ENCODE measurements at regions of chr14 and their contacts with region 1.

Region 1: DNA sequence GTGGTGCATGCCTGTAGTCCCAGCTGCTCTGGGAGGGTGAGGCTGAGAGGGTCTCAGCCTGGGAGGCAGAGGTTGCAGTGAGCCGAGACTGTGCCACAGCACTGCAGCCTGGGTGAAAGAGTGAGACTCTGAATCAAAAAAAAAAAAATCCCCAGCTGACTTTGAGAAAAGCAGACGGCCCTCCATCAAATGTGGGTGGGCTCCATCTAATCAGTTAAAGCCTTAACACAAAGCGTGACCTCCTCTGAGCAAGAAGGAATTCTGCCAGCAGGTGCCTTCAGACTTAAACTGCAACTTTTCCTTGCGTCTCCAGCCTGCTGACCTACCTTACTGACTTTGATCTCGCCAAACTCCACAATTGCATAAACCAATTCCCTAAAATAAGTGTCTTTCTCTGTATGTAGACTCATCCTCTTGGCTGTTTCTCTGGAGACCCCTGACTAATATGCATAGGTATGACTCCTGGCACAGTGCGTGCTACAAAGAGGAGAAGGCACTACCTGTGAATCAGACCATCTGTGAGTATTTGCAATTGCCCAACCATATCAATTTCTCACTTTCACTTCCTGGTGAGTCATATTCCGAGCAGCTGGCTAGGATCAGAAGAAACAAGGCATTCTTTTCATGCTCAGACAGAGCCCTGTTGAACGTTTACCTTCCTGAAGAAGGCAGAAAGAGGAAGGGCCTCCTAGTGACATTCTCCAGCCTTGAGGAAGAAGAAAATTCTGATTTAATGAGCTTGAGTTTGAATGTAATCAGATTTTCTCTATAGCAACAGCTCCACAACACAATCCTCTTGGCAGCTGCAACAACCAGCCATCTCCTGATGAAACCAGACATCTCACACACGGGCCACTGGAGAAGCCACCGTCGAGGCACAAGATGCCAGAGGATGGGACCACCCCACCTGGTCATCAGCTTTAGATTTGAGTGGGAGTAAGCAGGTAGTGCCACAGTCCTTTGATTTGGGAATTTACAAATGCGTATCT is 54.3 kb downstream of the CLMN start:
- DNase-seq: peak; percentile 88 to 97
- ATAC-seq: peak; percentile 98 to 99
- H3K4me3 ChIP-seq: no peak overlapping the region; the same call in 2 of the 3 replicates
- H3K27ac ChIP-seq: peak overlapping the region; percentile 86 to 88
- H3K4me1 ChIP-seq: peaks cover 36% of the 10 kb centered on the region
- CTCF ChIP-seq: no peak
- EP300 ChIP-seq: peak; percentile 94 to 96
- POLR2A ChIP-seq: no peak
- RAD21 ChIP-seq: peak; percentile 31 to 54; a peak in 4 of 5 replicates

Region 2: GRCh38 chr14:95250140-95250769 is 15.1 kb before region 1 on chr14:
- CTCF ChIA-PET with region 1: interaction called, 4 read pairs
- POLR2A ChIA-PET with region 1: interaction called, 11 read pairs
- DNase-seq: no peak
- ATAC-seq: no peak
- H3K4me3 ChIP-seq: no peak overlapping the region
- H3K27ac ChIP-seq: peak overlapping the region; percentile 83 to 88
- H3K4me1 ChIP-seq: peaks cover 40% of the 10 kb centered on the region
- CTCF ChIP-seq: no peak
- EP300 ChIP-seq: no peak
- POLR2A ChIP-seq: no peak
- RAD21 ChIP-seq: no peak

Region 3: DNA sequence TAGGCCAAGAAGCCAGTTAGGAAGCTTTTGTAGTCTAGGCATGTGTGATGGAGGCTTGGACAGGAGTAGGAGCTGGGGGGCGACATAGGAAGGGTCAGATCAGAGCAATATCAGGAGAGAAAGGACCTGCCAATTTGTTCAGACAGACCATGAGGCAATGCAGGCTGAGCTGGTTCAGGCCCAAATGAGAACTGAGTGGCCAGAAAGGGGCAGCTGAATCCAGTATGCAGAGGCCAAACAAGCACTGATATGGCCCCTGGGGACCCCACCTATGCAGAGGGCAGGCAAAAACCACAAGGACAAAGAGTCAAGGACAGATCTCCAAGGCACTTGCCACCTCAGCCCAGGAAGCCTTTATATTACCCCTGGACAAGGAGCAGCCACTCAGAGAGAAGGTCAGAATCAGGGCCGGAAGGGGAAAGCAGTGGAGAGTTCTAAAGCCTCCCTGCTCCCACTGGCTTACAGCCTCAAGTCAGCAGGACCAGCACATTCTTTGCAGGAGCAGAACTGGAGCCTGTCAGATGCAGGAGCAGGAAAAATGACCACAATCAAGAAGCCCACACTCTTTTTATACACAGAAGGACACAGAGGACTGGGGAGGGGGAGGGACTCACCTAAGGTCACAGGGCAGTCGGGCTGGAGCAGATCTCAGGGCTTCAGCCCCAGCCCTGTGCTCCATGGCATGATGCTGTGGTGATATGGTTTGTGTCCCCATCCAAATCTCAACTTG is 17.1 kb after region 1 on chr14:
- CTCF ChIA-PET with region 1: no interaction called
- POLR2A ChIA-PET with region 1: no interaction called
- DNase-seq: no peak
- ATAC-seq: no peak
- H3K4me3 ChIP-seq: no peak overlapping the region
- H3K27ac ChIP-seq: no peak overlapping the region
- H3K4me1 ChIP-seq: no peaks in the 10 kb centered on the region
- CTCF ChIP-seq: no peak
- EP300 ChIP-seq: no peak
- POLR2A ChIP-seq: no peak
- RAD21 ChIP-seq: no peak

Region 4: DNA sequence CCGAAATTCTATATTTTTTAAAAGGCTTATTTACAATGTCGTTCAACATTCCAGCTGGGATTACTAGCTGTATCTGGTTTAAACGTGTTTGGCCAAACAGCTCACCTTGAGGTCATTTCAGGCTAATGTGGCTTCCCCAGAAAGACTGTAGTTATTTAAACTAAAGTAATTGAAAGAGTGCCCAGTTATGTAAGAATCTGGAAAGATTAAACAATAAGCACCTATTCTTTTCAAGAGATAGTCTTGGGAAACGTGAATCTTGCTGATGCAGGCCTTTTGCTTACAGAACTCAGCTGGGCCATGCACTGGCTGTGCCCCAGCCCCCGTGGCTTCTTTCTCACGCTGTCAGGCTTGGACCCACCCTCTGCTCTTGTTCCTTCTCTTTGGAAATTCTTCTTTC is 293.8 kb after region 1 on chr14:
- CTCF ChIA-PET with region 1: no interaction called
- POLR2A ChIA-PET with region 1: no interaction called
- DNase-seq: no peak
- ATAC-seq: no peak
- H3K4me3 ChIP-seq: no peak overlapping the region
- H3K27ac ChIP-seq: no peak overlapping the region
- H3K4me1 ChIP-seq: no peaks in the 10 kb centered on the region
- CTCF ChIP-seq: no peak
- EP300 ChIP-seq: no peak
- POLR2A ChIP-seq: no peak
- RAD21 ChIP-seq: no peak

Measured in A549 (cell line).